ENCODE measurements at regions of chr7 and their contacts with region 1.

Region 1: GRCh38 chr7:97104719-97105238 is 12.7 kb upstream of the SDHAF3 start:
- DNase-seq: peak; percentile 79
- H3K4me3 Mint-ChIP-seq: no peak overlapping the region
- H3K27ac Mint-ChIP-seq: no peak overlapping the region
- H3K4me1 Mint-ChIP-seq: no peaks in the 10 kb centered on the region
- H3K27me3 Mint-ChIP-seq: peaks cover 32% of the 10 kb centered on the region
- CTCF ChIP-seq: peak; percentile 89

Region 2: DNA sequence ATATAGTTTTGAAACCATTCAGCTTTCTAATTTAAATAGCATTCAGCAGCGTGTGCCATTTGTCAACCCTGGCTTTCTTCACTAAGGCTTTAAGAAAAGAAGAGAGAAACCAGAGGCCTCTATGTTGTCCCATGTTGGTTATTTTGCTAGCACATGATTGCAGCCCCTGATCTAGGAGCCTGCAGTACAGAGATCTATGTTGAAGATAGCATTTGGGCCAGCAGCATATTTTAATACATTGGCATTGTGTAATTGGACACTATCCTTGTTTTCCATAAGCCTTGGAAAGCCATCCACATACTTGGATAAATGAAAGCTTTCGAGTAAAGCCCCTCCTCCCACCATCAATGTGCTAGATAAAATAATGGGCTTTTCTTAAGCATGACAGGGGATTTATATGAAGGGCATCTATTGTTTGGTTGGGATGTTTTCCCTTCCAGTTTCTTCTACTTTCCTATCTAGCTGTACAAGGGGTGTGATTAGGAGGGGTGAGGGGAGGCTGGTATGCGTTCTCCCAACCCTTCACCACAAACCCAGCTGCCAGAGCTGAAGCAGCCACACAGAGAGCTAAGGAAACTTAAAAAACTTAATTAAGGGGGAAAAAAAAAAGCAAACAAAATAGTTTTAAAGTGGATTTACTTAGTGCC is 10.4 kb before region 1 on chr7:
- CTCF ChIA-PET with region 1: interaction called, 13 read pairs
- POLR2A ChIA-PET with region 1: interaction called, 3 read pairs
- intact Hi-C with region 1: no loop called
- DNase-seq: no peak
- H3K4me3 Mint-ChIP-seq: no peak overlapping the region
- H3K27ac Mint-ChIP-seq: no peak overlapping the region
- H3K4me1 Mint-ChIP-seq: no peaks in the 10 kb centered on the region
- H3K27me3 Mint-ChIP-seq: peaks cover 40% of the 10 kb centered on the region
- CTCF ChIP-seq: no peak

Region 3: DNA sequence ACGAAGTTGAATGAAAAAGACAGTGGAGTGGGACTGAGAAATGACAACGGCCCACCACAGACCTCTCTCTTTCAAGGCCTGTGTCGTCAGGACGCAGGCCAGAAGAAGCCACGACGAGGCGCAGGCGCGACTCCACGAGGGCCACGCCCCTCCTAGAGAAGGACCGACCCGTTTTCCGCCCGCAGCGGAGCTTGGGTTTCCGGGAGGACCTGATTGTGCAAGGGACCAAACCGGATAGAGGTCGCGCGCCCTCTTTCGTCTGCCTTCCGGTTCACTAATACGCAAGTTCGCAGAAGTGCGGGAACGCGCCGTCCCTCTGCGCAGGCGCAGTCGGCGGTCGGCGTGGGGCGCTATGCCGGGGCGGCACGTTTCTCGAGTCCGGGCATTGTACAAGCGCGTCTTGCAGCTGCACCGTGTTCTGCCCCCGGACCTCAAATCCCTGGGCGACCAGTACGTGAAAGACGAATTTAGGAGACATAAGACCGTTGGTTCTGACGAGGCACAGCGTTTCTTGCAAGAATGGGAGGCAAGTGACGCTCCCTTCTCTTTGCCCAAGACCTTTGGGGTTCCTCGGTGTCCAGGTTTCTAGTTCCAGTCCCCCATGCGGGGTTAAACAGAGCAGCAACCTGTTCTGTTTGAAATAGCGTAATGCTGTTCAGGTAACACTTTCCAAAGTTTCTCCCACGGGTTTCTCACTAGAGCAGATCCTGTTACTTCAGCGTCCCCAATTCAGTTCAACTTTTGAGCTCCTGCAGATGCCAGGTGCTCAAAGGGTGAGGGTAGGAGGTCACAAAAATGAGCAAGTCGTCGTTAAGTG is 12.8 kb after region 1 on chr7 and contains the start of gene SDHAF3:
- CTCF ChIA-PET with region 1: interaction called, 29 read pairs
- POLR2A ChIA-PET with region 1: no interaction called
- intact Hi-C with region 1: no loop called
- DNase-seq: peak; percentile 95
- H3K4me3 Mint-ChIP-seq: peak within 1 kb of the TSS; percentile 94
- H3K27ac Mint-ChIP-seq: peak within 1 kb of the TSS; percentile 68
- H3K4me1 Mint-ChIP-seq: peaks cover 23% of the 10 kb centered on the region
- H3K27me3 Mint-ChIP-seq: no peaks in the 10 kb centered on the region
- CTCF ChIP-seq: no peak
- total RNA-seq, gene SDHAF3: 6.7 and 12.3 TPM in 2 replicates

Region 4: GRCh38 chr7:97130417-97131139 is 25.8 kb after region 1 on chr7:
- CTCF ChIA-PET with region 1: no interaction called
- POLR2A ChIA-PET with region 1: no interaction called
- intact Hi-C with region 1: no loop called
- DNase-seq: peak; percentile 30
- H3K4me3 Mint-ChIP-seq: no peak overlapping the region
- H3K27ac Mint-ChIP-seq: no peak overlapping the region
- H3K4me1 Mint-ChIP-seq: no peaks in the 10 kb centered on the region
- H3K27me3 Mint-ChIP-seq: no peaks in the 10 kb centered on the region
- CTCF ChIP-seq: no peak

Region 5: GRCh38 chr7:97179454-97180104 is 74.8 kb after region 1 on chr7:
- CTCF ChIA-PET with region 1: interaction called, 13 read pairs
- POLR2A ChIA-PET with region 1: no interaction called
- intact Hi-C with region 1: loop called (anchors 1 kb)
- DNase-seq: peak; percentile 77
- H3K4me3 Mint-ChIP-seq: no peak overlapping the region
- H3K27ac Mint-ChIP-seq: no peak overlapping the region
- H3K4me1 Mint-ChIP-seq: peaks cover 4% of the 10 kb centered on the region
- H3K27me3 Mint-ChIP-seq: no peaks in the 10 kb centered on the region
- CTCF ChIP-seq: peak; percentile 74

Region 6: DNA sequence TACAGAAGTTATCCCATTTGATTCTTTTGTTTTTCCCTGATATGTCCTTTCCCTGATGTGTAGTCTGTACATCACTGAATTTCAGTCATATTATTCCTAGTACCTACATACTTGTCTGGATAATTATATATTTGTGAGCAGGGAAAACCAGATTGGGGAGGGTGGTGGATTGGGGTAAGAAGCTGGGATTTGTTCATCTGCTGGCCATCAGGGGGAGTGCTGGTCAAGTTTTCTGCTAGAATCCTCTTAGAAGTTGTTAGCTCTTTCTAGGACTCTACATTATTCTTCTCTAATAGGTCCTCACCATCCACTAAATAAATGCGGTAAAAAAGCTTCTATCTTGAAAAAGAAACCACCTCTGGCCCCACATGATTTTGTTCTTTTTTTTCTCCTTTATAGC is 394.4 kb after region 1 on chr7:
- CTCF ChIA-PET with region 1: interaction called, 4 read pairs
- POLR2A ChIA-PET with region 1: no interaction called
- intact Hi-C with region 1: loop called (anchors 2 kb)
- DNase-seq: peak; percentile 56
- H3K4me3 Mint-ChIP-seq: no peak overlapping the region
- H3K27ac Mint-ChIP-seq: no peak overlapping the region
- H3K4me1 Mint-ChIP-seq: no peaks in the 10 kb centered on the region
- H3K27me3 Mint-ChIP-seq: peaks cover 31% of the 10 kb centered on the region
- CTCF ChIP-seq: peak; percentile 46

Region 7: DNA sequence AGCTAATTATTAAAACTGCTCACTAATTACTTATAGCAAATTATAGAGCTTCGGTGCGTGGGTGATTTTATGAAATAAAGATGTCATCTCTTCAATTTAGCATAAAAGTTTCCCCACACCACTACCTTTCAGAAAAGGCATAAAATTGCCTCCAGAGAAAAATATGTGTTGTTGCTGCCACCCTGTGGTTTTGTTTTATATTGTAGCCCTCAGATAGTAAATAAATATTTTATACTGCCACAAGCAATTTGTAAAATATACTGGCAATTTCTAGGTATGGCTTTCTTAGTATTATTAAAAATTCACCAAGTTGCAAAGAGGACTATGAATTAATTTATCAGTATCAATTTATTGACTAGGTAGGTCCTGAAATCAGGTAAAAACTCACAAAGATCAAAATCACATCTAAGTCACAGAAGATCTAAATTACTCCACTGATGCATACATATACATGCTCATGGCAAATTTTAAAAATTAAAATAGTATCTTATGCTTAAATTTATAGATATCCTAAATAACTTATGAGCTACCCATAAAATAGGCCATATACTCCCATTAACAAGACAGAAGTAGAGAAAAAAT is 740.9 kb after region 1 on chr7:
- CTCF ChIA-PET with region 1: interaction called, 39 read pairs
- POLR2A ChIA-PET with region 1: interaction called, 3 read pairs
- intact Hi-C with region 1: loop called (anchors 1 kb)
- DNase-seq: peak; percentile 43
- H3K4me3 Mint-ChIP-seq: no peak overlapping the region
- H3K27ac Mint-ChIP-seq: no peak overlapping the region
- H3K4me1 Mint-ChIP-seq: no peaks in the 10 kb centered on the region
- H3K27me3 Mint-ChIP-seq: peaks cover 16% of the 10 kb centered on the region
- CTCF ChIP-seq: peak; percentile 24

Measured in MCF 10A (cell line).